PC-3 (cell line): ENCODE measurements at regions of chr3 and their contacts with region 1.

Region 1: DNA sequence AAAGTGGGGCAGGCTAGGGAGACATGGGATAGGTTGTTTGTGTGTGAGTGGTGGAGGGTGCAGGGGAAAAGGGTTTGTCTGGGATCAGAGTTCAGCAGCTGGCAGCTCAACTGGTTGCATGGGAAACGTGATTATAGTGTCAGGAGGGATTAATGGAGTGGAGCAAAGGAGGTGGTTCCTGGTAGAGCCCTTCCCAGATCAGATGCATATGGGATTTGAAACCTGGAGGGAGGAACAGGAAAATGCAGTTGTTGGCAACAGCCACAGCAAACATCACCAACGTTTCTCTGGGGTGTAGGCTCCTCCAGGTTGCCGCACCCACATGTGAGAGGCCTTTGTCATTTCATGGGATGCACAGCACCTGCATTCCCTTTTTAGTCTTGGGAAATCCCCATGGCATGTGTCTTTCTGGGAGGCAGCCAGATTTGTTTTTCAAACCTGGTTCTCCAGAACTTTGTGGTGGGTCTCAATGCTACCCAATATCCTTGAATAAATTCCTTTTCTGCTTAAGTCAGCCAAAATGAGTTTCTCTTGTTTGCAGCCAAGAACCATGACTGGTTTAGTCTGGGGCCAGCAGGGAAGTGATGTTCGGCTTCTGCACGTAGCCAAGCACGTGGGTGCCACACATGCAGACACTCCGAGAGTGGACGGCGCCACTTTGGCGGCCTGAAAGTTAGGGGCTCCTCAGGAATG is 61.3 kb downstream of the BDH1 start:
- DNase-seq: peak; percentile 16
- ATAC-seq: no peak
- H3K4me3 ChIP-seq: no peak overlapping the region
- H3K27ac ChIP-seq: no peak overlapping the region
- H3K4me1 ChIP-seq: peaks cover 19% of the 10 kb centered on the region
- H3K27me3 ChIP-seq: no peaks in the 10 kb centered on the region
- CTCF ChIP-seq: no peak

Region 2: GRCh38 chr3:197434830-197435229 is 59.7 kb before region 1 on chr3:
- CTCF ChIA-PET with region 1: no interaction called
- POLR2A ChIA-PET with region 1: no interaction called
- intact Hi-C with region 1: no loop called
- DNase-seq: no peak
- ATAC-seq: no peak
- H3K4me3 ChIP-seq: no peak overlapping the region
- H3K27ac ChIP-seq: no peak overlapping the region
- H3K4me1 ChIP-seq: no peaks in the 10 kb centered on the region
- H3K27me3 ChIP-seq: no peaks in the 10 kb centered on the region
- CTCF ChIP-seq: no peak

Region 3: DNA sequence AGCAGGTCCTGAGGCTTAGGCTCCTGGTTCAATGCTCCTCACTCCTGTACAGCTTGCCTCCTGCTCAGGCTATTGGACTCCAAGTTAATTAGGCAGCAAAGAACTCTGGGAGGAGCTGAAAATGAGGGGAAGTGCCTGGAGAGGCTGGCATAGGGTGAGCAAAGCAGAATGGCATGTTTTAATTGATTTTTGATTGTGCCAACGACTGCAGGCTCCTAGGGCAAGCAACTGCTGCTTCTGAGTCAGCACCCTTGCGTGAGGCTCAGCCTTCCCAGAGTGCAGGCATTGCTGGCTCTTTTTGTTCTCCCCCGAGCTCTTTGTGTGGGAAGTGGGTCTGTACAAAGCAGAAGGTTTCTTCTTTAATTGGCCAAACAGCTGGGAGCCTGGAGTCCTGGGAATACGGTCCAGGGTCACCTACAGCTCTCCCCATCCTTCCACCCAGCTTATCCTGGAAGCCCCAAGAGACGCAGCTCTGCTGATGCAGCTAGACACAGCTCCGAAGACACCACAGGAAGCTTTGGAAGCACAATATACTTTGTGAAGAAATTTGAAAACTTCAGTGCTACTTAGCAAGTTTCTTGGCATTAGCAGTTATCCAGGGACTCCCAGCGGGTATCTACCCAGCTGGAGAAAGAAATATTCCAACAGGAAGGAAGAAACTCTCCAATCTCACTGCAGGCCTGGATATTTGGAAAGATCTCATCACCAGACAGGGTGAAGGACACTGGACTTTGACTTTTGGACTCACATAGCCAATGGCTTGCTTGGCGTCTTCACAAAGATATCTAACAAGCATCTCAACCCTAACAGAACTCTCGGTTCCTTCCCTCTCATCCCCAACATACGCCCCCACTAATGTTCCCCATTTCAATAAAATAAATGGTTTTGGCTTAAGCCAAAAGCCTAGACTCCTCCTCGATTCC is 15.5 kb before region 1 on chr3:
- CTCF ChIA-PET with region 1: no interaction called
- POLR2A ChIA-PET with region 1: interaction called, 11 read pairs
- intact Hi-C with region 1: no loop called
- DNase-seq: peak; percentile 64
- ATAC-seq: peak; percentile 87
- H3K4me3 ChIP-seq: no peak overlapping the region
- H3K27ac ChIP-seq: peak overlapping the region; percentile 34
- H3K4me1 ChIP-seq: peaks cover 29% of the 10 kb centered on the region
- H3K27me3 ChIP-seq: no peaks in the 10 kb centered on the region
- CTCF ChIP-seq: no peak